ENCODE measurements at regions of chrX and their contacts with region 1.

Region 1: GRCh38 chrX:4193500-4194190 is 480.2 kb upstream of the PRKX start:
- DNase-seq: no peak
- ATAC-seq: no peak
- H3K4me3 Mint-ChIP-seq: no peak overlapping the region
- H3K27ac Mint-ChIP-seq: no peak overlapping the region
- H3K4me1 Mint-ChIP-seq: no peaks in the 10 kb centered on the region
- H3K27me3 Mint-ChIP-seq: no peaks in the 10 kb centered on the region

Region 2: DNA sequence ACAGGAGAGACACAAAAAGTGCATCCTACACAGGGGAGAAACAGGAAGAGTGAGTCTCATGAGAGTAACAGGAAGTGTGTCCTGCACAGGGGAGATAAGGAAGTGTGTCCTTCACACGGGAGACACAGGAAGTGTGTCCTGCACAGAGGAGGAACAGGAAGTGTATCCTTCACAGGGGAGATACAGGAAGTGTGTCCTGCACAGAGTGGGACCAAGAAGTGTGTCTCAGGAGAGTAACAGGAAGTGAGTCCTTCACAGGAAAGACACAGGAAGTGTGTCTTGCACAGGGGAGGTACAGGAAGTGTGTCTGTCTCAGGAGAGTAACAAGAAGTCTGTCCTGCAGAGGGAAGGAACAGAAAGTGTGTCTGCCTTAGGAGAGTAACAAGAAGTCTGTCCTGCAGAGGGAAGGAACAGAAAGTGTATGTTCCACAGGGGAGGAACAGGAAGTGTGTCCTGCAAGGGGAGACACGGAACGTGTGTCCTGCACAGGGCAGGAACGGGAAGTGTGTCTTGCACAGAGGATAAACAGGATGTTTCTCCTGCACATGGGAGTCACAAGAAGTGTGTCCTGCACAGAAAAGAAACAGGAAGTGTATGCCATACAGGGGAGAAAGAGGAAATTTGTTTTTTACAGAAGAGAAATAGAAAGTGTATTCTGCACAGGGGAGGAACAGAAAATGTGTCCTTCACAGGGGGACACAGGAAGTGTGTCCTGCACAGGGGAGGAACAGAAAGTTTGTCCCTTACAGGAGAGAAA is 1050.4 kb before region 1 on chrX:
- CTCF ChIA-PET with region 1: no interaction called
- POLR2A ChIA-PET with region 1: no interaction called
- intact Hi-C with region 1: no loop called
- DNase-seq: peak; percentile 4
- ATAC-seq: peak; percentile 70
- H3K4me3 Mint-ChIP-seq: peak overlapping the region; percentile 48
- H3K27ac Mint-ChIP-seq: peak overlapping the region; percentile 72
- H3K4me1 Mint-ChIP-seq: peaks cover 15% of the 10 kb centered on the region
- H3K27me3 Mint-ChIP-seq: no peaks in the 10 kb centered on the region

Region 3: DNA sequence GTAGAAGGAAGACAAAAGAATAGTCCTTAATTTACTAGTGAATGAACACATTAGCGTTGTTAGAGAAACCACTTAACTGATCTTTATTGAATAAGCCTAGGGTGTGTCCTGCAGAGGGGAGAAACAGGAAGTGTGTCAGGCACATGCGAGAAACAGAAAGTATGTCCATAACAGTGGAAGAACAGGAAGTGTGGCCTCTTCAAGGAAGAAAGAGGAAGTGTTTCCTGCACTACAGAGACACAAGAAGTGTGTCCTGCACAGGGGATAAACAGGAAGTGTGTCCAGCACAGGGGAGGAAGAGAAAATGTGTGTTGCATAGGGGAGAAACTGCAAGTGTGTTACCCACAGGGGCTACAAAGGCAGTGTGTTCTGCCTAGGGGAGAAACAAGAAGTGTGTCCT is 59.4 kb after region 1 on chrX:
- CTCF ChIA-PET with region 1: no interaction called
- POLR2A ChIA-PET with region 1: no interaction called
- intact Hi-C with region 1: no loop called
- DNase-seq: no peak
- ATAC-seq: no peak
- H3K4me3 Mint-ChIP-seq: no peak overlapping the region
- H3K27ac Mint-ChIP-seq: no peak overlapping the region
- H3K4me1 Mint-ChIP-seq: peaks cover 6% of the 10 kb centered on the region
- H3K27me3 Mint-ChIP-seq: no peaks in the 10 kb centered on the region

Region 4: GRCh38 chrX:4560192-4560591 is 366.5 kb after region 1 on chrX:
- CTCF ChIA-PET with region 1: no interaction called
- POLR2A ChIA-PET with region 1: no interaction called
- intact Hi-C with region 1: no loop called
- DNase-seq: no peak
- ATAC-seq: no peak
- H3K4me3 Mint-ChIP-seq: no peak overlapping the region
- H3K27ac Mint-ChIP-seq: no peak overlapping the region
- H3K4me1 Mint-ChIP-seq: no peaks in the 10 kb centered on the region
- H3K27me3 Mint-ChIP-seq: no peaks in the 10 kb centered on the region

Region 5: GRCh38 chrX:4825550-4825949 is 631.9 kb after region 1 on chrX:
- CTCF ChIA-PET with region 1: no interaction called
- POLR2A ChIA-PET with region 1: no interaction called
- intact Hi-C with region 1: no loop called
- DNase-seq: no peak
- ATAC-seq: no peak
- H3K4me3 Mint-ChIP-seq: no peak overlapping the region
- H3K27ac Mint-ChIP-seq: no peak overlapping the region
- H3K4me1 Mint-ChIP-seq: no peaks in the 10 kb centered on the region
- H3K27me3 Mint-ChIP-seq: no peaks in the 10 kb centered on the region

Region 6: DNA sequence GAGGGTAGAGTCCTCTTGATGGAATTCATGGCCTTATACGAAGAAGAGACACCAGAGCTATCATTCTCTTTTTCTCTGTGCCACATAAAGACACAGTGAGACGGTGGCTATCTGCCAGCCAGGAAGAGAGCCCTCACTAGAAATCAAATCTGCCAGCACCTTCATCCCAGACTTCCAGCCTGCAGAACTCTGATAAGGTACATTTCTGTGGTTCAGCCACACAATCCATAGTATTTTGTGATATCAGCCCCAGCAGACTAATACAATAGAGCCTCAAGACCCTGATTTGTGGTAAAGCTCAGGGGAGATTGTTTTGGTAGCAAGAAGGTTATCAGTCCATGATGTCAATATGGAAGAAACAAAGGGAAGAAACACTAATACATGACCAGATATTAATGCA is 821.8 kb after region 1 on chrX:
- CTCF ChIA-PET with region 1: no interaction called
- POLR2A ChIA-PET with region 1: no interaction called
- intact Hi-C with region 1: loop called in 1 of 2 experiments (anchors 10 kb)
- DNase-seq: no peak
- ATAC-seq: no peak
- H3K4me3 Mint-ChIP-seq: no peak overlapping the region
- H3K27ac Mint-ChIP-seq: no peak overlapping the region
- H3K4me1 Mint-ChIP-seq: no peaks in the 10 kb centered on the region
- H3K27me3 Mint-ChIP-seq: no peaks in the 10 kb centered on the region